HepG2 (cell line): ENCODE measurements at regions of chr6 and their contacts with region 1.

Region 1: DNA sequence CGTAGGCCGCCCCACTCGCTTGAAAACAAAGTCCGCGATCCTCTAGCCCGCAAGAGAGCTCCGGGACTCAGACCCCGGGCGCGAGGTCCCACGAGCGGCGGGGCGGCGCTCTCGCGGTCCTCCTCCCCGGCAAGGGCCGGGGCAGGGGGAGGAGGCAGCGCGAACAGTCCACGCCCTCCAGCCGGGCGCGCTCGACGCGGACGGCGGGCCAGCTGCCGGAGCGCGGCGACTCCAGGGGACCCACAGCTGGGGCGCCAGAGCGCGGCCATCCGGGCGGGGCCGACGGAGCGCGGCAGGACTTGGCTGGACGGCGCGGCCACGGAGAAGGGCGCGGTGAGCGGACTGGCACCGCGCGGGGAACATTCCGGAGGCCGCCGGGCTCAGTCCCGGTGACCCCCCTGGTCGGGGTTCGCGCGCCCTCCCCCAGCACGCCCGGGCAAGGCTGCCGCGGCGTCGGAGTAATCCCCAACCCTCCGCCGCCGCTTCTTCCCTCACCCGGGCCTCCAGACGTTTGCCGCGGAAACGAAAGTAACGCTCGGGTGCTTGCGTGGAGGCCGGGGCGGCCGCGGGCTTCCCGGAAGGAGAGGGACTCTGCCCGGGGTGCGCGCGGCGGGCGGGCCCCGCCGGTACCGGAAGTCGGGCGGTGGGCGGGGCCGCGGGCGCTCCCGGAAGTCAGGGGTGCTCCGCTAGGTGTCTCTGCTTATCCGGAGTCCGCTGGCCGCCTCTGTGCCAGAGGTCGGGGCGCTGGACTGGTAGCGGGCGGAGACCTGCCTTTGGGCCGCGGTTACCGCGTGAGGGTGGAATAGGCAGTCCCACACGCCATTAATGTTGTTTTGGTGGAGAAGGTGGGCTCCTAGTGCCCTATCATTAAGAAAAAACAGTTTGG is at the start of gene RIPK1:
- DNase-seq: peak; percentile 89
- ATAC-seq: peak; percentile 82
- H3K4me3 ChIP-seq: peak within 1 kb of the TSS; percentile 92 to 99 (median 97)
- H3K27ac ChIP-seq: peak within 1 kb of the TSS; percentile 99
- H3K4me1 ChIP-seq: peaks cover 54% of the 10 kb centered on the region
- H3K27me3 ChIP-seq: no peaks in the 10 kb centered on the region; a peak in 1 of 5 replicates
- CTCF ChIP-seq: peak; percentile 80
- EP300 ChIP-seq: no peak; a peak in 1 of 4 replicates
- POLR2A ChIP-seq: peak; percentile 76 to 94
- RAD21 ChIP-seq: peak; percentile 70
- total RNA-seq, gene RIPK1: 10.3 and 15.0 TPM in 2 replicates

Region 2: GRCh38 chr6:2993755-2994317 is 74.7 kb before region 1 on chr6:
- CTCF ChIA-PET with region 1: no interaction called
- POLR2A ChIA-PET with region 1: interaction called, 34 read pairs
- in situ Hi-C with region 1: no loop called
- intact Hi-C with region 1: no loop called
- DNase-seq: peak; percentile 93
- ATAC-seq: peak; percentile 31
- H3K4me3 ChIP-seq: peak overlapping the region in 1 of 3 experiments; percentile 11; a peak in 1 of 6 replicates
- H3K27ac ChIP-seq: peak overlapping the region; percentile 22
- H3K4me1 ChIP-seq: peaks cover 53% of the 10 kb centered on the region
- H3K27me3 ChIP-seq: no peaks in the 10 kb centered on the region; a peak in 1 of 5 replicates
- CTCF ChIP-seq: peak; percentile 17; the same call in 1 of the 2 replicates
- EP300 ChIP-seq: peak in 1 of 2 experiments; percentile 94; a peak in 2 of 4 replicates
- POLR2A ChIP-seq: no peak
- RAD21 ChIP-seq: no peak

Region 3: GRCh38 chr6:3118353-3119039 is 49.9 kb after region 1 on chr6 and contains the start of gene BPHL:
- CTCF ChIA-PET with region 1: no interaction called
- POLR2A ChIA-PET with region 1: interaction called, 13 read pairs
- in situ Hi-C with region 1: no loop called
- intact Hi-C with region 1: loop called (anchors 10 kb)
- DNase-seq: peak; percentile 87
- ATAC-seq: peak; percentile 89
- H3K4me3 ChIP-seq: peak within 1 kb of the TSS; percentile 82 to 84 (median 84)
- H3K27ac ChIP-seq: peak within 1 kb of the TSS; percentile 88
- H3K4me1 ChIP-seq: peaks cover 35% of the 10 kb centered on the region
- H3K27me3 ChIP-seq: no peaks in the 10 kb centered on the region; a peak in 1 of 5 replicates
- CTCF ChIP-seq: peak; percentile 63
- EP300 ChIP-seq: no peak
- POLR2A ChIP-seq: peak; percentile 84 to 96
- RAD21 ChIP-seq: peak; percentile 67
- total RNA-seq, gene BPHL: 39.5 and 48.6 TPM in 2 replicates

Region 4: DNA sequence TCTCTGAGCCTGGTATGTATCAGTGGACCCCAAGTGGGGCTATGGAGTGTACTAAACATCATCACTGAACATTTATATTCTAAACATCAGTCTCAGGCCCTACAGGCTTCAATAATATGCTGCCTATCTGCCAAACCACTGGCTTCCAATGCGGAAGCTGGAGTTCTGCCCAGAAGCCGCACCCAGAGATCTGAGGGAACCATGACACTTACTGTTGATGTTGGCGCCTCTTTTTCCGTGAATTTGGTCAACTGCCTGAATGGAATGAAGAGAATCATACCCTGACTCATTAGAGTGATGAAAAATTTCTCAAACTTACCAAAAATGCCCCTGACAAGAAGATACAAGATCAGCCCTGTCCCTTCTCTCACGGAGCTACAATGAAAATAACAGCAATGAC is 322.1 kb after region 1 on chr6:
- CTCF ChIA-PET with region 1: no interaction called
- POLR2A ChIA-PET with region 1: no interaction called
- in situ Hi-C with region 1: no loop called
- intact Hi-C with region 1: no loop called
- DNase-seq: no peak
- ATAC-seq: no peak
- H3K4me3 ChIP-seq: no peak overlapping the region
- H3K27ac ChIP-seq: no peak overlapping the region
- H3K4me1 ChIP-seq: peaks cover 24% of the 10 kb centered on the region
- H3K27me3 ChIP-seq: no peaks in the 10 kb centered on the region
- CTCF ChIP-seq: no peak
- EP300 ChIP-seq: no peak
- POLR2A ChIP-seq: no peak
- RAD21 ChIP-seq: no peak